Activated naive CD4-positive, alpha-beta T cell treated with anti-CD3 and anti-CD28 coated beads for 36 hours (primary cell): ENCODE measurements at regions of chr2 and their contacts with region 1.

Region 1: DNA sequence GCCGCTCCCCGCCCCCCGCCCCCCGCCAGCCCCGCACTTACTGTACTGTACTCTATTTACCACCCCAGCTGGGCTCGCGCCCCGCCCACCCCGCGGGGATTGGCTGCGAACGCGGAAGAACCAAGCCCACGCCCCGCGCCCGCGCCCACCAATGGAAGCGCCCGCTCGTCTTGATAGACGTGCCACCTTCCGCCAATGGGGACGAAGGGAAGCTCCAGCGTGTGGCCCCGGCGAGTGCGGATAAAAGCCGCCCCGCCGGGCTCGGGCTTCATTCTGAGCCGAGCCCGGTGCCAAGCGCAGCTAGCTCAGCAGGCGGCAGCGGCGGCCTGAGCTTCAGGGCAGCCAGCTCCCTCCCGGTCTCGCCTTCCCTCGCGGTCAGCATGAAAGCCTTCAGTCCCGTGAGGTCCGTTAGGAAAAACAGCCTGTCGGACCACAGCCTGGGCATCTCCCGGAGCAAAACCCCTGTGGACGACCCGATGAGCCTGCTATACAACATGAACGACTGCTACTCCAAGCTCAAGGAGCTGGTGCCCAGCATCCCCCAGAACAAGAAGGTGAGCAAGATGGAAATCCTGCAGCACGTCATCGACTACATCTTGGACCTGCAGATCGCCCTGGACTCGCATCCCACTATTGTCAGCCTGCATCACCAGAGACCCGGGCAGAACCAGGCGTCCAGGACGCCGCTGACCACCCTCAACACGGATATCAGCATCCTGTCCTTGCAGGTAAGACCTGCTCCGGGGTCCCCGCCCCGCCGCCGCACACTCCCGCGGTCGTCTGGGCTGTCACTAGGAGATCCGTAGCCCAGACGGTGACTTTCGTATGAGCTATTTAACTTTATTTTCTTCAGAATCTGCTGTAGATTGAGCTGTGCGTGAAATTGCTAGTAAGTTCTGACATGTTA is at the start of gene ID2:
- DNase-seq: peak; percentile 98
- H3K4me3 Mint-ChIP-seq: peak within 1 kb of the TSS; percentile 96
- H3K27ac Mint-ChIP-seq: peak within 1 kb of the TSS; percentile 91
- H3K4me1 Mint-ChIP-seq: peaks cover 31% of the 10 kb centered on the region
- H3K27me3 Mint-ChIP-seq: peaks cover 18% of the 10 kb centered on the region
- total RNA-seq, gene ID2: 73.9 to 81.9 TPM

Region 2: DNA sequence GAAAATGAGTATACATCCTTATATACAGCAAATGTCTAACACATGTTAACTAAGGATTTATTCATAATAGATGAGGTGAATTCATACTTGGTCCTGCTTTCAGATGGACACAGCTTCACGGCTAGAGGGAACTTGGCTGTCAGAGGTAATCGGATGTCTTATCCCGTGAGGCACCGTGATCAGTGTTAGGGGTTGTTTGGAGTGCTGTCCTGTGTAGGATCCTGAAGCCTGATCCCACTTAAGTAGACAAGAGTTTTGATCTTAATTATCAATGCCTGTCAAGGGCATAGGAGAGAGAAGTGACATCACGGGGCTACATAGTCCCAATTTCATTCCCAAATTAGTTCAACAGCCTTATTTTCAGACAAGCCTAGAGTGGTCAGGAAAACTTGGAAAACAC is 1560.2 kb before region 1 on chr2:
- CTCF ChIA-PET with region 1: no interaction called
- intact Hi-C with region 1: loop called (anchors 5 kb)
- DNase-seq: no peak
- H3K4me3 Mint-ChIP-seq: no peak overlapping the region
- H3K27ac Mint-ChIP-seq: no peak overlapping the region
- H3K4me1 Mint-ChIP-seq: no peaks in the 10 kb centered on the region
- H3K27me3 Mint-ChIP-seq: no peaks in the 10 kb centered on the region

Region 3: DNA sequence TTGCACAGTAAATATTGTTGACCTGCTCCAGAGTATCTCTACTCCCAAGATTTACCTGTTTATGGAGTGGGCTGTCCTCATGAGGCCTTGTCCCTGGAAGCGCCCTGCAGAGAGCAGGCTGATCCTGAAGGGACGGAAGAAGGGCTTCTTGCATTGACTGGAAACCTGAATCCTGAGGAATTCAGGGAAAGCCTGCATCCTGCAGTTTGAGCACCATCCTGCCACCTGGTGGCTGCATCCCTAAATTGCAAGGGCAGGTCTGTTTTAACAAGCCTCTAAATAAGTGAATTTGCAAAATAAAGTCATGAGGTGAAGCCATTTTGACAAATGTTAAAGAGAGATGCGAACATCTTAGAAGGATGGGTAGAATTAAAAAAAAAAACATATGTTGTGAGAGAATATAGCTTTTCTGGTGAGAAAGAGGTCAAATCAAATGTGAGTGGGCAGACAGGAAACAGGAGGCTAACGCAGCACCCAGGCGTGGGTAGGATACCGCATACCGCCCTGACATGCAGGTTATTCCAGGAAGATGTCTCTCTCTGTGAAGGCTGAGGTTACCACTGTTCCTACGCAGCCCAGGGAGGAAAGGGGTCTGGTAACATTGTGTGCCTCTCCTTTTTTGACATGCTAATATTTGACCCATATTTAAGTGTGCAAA is 1009.9 kb before region 1 on chr2:
- CTCF ChIA-PET with region 1: no interaction called
- intact Hi-C with region 1: loop called (anchors 5 kb)
- DNase-seq: peak; percentile 80
- H3K4me3 Mint-ChIP-seq: peak overlapping the region; percentile 20
- H3K27ac Mint-ChIP-seq: peak overlapping the region; percentile 74
- H3K4me1 Mint-ChIP-seq: peaks cover 29% of the 10 kb centered on the region
- H3K27me3 Mint-ChIP-seq: no peaks in the 10 kb centered on the region

Region 4: GRCh38 chr2:7984693-7985353 is 697.2 kb before region 1 on chr2:
- CTCF ChIA-PET with region 1: no interaction called
- intact Hi-C with region 1: loop called (anchors 5 kb)
- DNase-seq: peak; percentile 22
- H3K4me3 Mint-ChIP-seq: peak overlapping the region; percentile 8
- H3K27ac Mint-ChIP-seq: peak overlapping the region; percentile 62
- H3K4me1 Mint-ChIP-seq: peaks cover 20% of the 10 kb centered on the region
- H3K27me3 Mint-ChIP-seq: peaks cover 4% of the 10 kb centered on the region

Region 5: GRCh38 chr2:8408560-8409460 is 273.2 kb before region 1 on chr2:
- CTCF ChIA-PET with region 1: no interaction called
- intact Hi-C with region 1: loop called (anchors 1 kb)
- DNase-seq: peak; percentile 83
- H3K4me3 Mint-ChIP-seq: no peak overlapping the region
- H3K27ac Mint-ChIP-seq: peak overlapping the region; percentile 64
- H3K4me1 Mint-ChIP-seq: peaks cover 26% of the 10 kb centered on the region
- H3K27me3 Mint-ChIP-seq: peaks cover 13% of the 10 kb centered on the region

Region 6: GRCh38 chr2:8656160-8656641 is 25.8 kb before region 1 on chr2:
- CTCF ChIA-PET with region 1: no interaction called
- intact Hi-C with region 1: loop called (anchors 2 kb)
- DNase-seq: no peak
- H3K4me3 Mint-ChIP-seq: no peak overlapping the region
- H3K27ac Mint-ChIP-seq: no peak overlapping the region
- H3K4me1 Mint-ChIP-seq: peaks cover 14% of the 10 kb centered on the region
- H3K27me3 Mint-ChIP-seq: peaks cover 14% of the 10 kb centered on the region